ENCODE measurements at regions of chr9 and their contacts with region 1.

Region 1: GRCh38 chr9:128552153-128552743 is at the start of gene SPTAN1:
- DNase-seq: peak; percentile 91 to 97 (median 95)
- ATAC-seq: peak; percentile 85
- H3K4me3 ChIP-seq: peak within 1 kb of the TSS; percentile 85 to 95
- H3K4me3 Mint-ChIP-seq: no peak within 1 kb of the TSS
- H3K27ac ChIP-seq: peak within 1 kb of the TSS; percentile 92 to 93
- H3K27ac Mint-ChIP-seq: peak within 1 kb of the TSS; percentile 96
- H3K4me1 ChIP-seq: peaks cover 54% of the 10 kb centered on the region
- H3K4me1 Mint-ChIP-seq: peaks cover 24% of the 10 kb centered on the region
- H3K27me3 ChIP-seq: no peaks in the 10 kb centered on the region
- H3K27me3 Mint-ChIP-seq: no peaks in the 10 kb centered on the region
- CTCF ChIP-seq: no peak
- total RNA-seq, gene SPTAN1: 299 to 332 TPM

Region 2: DNA sequence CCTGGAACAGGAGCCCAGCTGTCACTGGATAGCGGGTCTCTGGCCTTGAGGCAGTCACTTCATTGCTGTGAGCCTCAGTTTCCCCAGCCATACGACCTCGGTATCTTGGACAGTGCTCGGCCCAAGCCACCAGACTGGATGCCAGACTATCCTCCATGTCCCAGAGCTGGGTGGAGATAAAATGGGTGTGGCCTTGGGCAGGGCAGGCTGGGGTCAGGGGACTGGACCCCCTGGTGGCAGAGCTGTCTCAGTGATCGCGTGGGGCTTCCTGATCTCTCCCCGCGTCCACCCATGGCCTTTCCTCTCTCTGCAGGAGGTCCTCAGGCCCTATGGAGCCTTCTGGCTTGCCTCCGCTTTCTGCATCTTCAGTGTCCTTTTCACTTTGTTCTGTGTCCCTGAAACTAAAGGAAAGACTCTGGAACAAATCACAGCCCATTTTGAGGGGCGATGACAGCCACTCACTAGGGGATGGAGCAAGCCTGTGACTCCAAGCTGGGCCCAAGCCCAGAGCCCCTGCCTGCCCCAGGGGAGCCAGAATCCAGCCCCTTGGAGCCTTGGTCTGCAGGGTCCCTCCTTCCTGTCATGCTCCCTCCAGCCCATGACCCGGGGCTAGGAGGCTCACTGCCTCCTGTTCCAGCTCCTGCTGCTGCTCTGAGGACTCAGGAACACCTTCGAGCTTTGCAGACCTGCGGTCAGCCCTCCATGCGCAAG is 1145.3 kb before region 1 on chr9:
- CTCF ChIA-PET with region 1: no interaction called
- POLR2A ChIA-PET with region 1: no interaction called
- intact Hi-C with region 1: no loop called
- DNase-seq: no peak
- ATAC-seq: no peak
- H3K4me3 ChIP-seq: no peak overlapping the region
- H3K4me3 Mint-ChIP-seq: no peak overlapping the region
- H3K27ac ChIP-seq: no peak overlapping the region
- H3K27ac Mint-ChIP-seq: no peak overlapping the region
- H3K4me1 ChIP-seq: no peaks in the 10 kb centered on the region
- H3K4me1 Mint-ChIP-seq: no peaks in the 10 kb centered on the region
- H3K27me3 ChIP-seq: peaks cover 0 to 10% of the 10 kb centered on the region in 2 experiments
- H3K27me3 Mint-ChIP-seq: peaks cover 43% of the 10 kb centered on the region
- CTCF ChIP-seq: no peak

Region 3: GRCh38 chr9:127611899-127612790 is 940.1 kb before region 1 on chr9 and contains the start of gene STXBP1:
- CTCF ChIA-PET with region 1: no interaction called
- POLR2A ChIA-PET with region 1: no interaction called
- intact Hi-C with region 1: loop called in 1 of 2 experiments (anchors 5 kb)
- DNase-seq: peak; percentile 70 to 92 (median 83)
- ATAC-seq: peak; percentile 80
- H3K4me3 ChIP-seq: peak within 1 kb of the TSS; percentile 59 to 82
- H3K4me3 Mint-ChIP-seq: peak within 1 kb of the TSS; percentile 93
- H3K27ac ChIP-seq: peak within 1 kb of the TSS in 1 of 2 experiments; percentile 42
- H3K27ac Mint-ChIP-seq: peak within 1 kb of the TSS; percentile 92
- H3K4me1 ChIP-seq: peaks cover 32% of the 10 kb centered on the region
- H3K4me1 Mint-ChIP-seq: peaks cover 36% of the 10 kb centered on the region
- H3K27me3 ChIP-seq: peaks cover 4 to 9% of the 10 kb centered on the region in 2 experiments
- H3K27me3 Mint-ChIP-seq: peaks cover 9% of the 10 kb centered on the region
- CTCF ChIP-seq: no peak
- total RNA-seq, gene STXBP1: 7.7 to 8.9 TPM

Region 4: GRCh38 chr9:128103589-128103962 is 448.7 kb before region 1 on chr9:
- CTCF ChIA-PET with region 1: no interaction called
- POLR2A ChIA-PET with region 1: no interaction called
- intact Hi-C with region 1: no loop called
- DNase-seq: peak in 7 of 9 experiments; percentile 16 to 70 (median 51)
- ATAC-seq: peak; percentile 63
- H3K4me3 ChIP-seq: no peak overlapping the region
- H3K4me3 Mint-ChIP-seq: no peak overlapping the region
- H3K27ac ChIP-seq: peak overlapping the region in 1 of 2 experiments; percentile 6
- H3K27ac Mint-ChIP-seq: peak overlapping the region; percentile 67
- H3K4me1 ChIP-seq: peaks cover 68% of the 10 kb centered on the region
- H3K4me1 Mint-ChIP-seq: peaks cover 55% of the 10 kb centered on the region
- H3K27me3 ChIP-seq: no peaks in the 10 kb centered on the region
- H3K27me3 Mint-ChIP-seq: no peaks in the 10 kb centered on the region
- CTCF ChIP-seq: peak; percentile 29

Region 5: DNA sequence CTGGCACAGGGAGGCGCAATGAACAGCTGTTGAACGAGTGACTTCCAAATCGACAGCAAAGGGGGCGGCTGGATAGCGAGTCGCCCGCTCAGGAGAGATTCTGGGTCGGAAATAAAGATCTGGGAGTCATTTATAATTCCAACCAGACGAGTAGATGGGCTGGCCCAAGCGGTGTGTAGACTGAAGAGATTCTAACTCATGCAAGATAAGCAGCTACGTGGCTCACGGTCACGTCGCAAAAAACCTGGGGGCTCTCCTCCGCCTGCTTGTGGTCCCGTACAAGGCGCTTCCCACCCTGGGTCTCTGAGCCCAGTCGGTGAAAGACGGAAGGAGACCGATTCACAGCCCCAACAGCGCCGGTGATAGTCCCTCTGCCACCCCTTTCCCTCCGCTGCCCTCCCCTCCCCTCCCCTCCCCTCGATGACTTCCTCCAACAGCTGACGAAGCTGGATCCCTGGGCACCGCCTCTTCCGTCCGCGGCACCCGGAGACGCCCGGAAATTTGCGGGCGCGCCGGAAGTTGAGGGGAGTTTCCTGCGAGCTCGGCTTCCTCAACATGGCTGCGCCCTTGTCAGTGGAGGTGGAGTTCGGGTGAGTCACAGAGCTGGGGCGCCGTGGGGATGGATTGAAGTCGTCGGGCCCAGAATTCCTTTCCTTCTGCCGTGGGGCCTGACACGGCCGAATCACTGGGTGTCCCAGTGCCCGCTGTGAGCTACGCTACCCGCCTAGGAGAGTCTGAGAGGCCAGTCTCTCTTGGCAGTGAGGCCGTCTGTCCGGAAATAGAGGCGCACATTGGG is 181.2 kb before region 1 on chr9 and contains the start of gene URM1:
- CTCF ChIA-PET with region 1: no interaction called
- POLR2A ChIA-PET with region 1: interaction called, 8 read pairs
- intact Hi-C with region 1: loop called in 1 of 2 experiments (anchors 2 kb)
- DNase-seq: peak; percentile 91 to 98 (median 96)
- ATAC-seq: peak; percentile 90
- H3K4me3 ChIP-seq: peak within 1 kb of the TSS; percentile 84 to 95
- H3K4me3 Mint-ChIP-seq: peak within 1 kb of the TSS; percentile 97
- H3K27ac ChIP-seq: peak within 1 kb of the TSS; percentile 76 to 96
- H3K27ac Mint-ChIP-seq: peak within 1 kb of the TSS; percentile 98
- H3K4me1 ChIP-seq: peaks cover 16% of the 10 kb centered on the region
- H3K4me1 Mint-ChIP-seq: peaks cover 43% of the 10 kb centered on the region
- H3K27me3 ChIP-seq: no peaks in the 10 kb centered on the region
- H3K27me3 Mint-ChIP-seq: no peaks in the 10 kb centered on the region
- CTCF ChIP-seq: no peak
- total RNA-seq, gene URM1: 30.4 to 31.5 TPM

Region 6: GRCh38 chr9:128540634-128541360 is 11.5 kb before region 1 on chr9:
- CTCF ChIA-PET with region 1: interaction called, 3 read pairs
- POLR2A ChIA-PET with region 1: interaction called, 15 read pairs
- intact Hi-C with region 1: no loop called
- DNase-seq: no peak
- ATAC-seq: no peak
- H3K4me3 ChIP-seq: no peak overlapping the region
- H3K4me3 Mint-ChIP-seq: no peak overlapping the region
- H3K27ac ChIP-seq: no peak overlapping the region
- H3K27ac Mint-ChIP-seq: peak overlapping the region; percentile 15
- H3K4me1 ChIP-seq: no peaks in the 10 kb centered on the region
- H3K4me1 Mint-ChIP-seq: peaks cover 3% of the 10 kb centered on the region
- H3K27me3 ChIP-seq: no peaks in the 10 kb centered on the region
- H3K27me3 Mint-ChIP-seq: no peaks in the 10 kb centered on the region
- CTCF ChIP-seq: no peak

Region 7: GRCh38 chr9:128688512-128689292 is 136.5 kb after region 1 on chr9 and contains the start of gene SET:
- CTCF ChIA-PET with region 1: no interaction called
- POLR2A ChIA-PET with region 1: interaction called, 4 read pairs
- intact Hi-C with region 1: loop called (anchors 1 kb)
- DNase-seq: peak; percentile 81 to 97 (median 92)
- ATAC-seq: peak; percentile 78
- H3K4me3 ChIP-seq: peak within 1 kb of the TSS; percentile 68 to 90
- H3K4me3 Mint-ChIP-seq: peak within 1 kb of the TSS; percentile 90
- H3K27ac ChIP-seq: peak within 1 kb of the TSS; percentile 68 to 91
- H3K27ac Mint-ChIP-seq: peak within 1 kb of the TSS; percentile 96
- H3K4me1 ChIP-seq: peaks cover 64% of the 10 kb centered on the region
- H3K4me1 Mint-ChIP-seq: peaks cover 67% of the 10 kb centered on the region
- H3K27me3 ChIP-seq: no peaks in the 10 kb centered on the region
- H3K27me3 Mint-ChIP-seq: no peaks in the 10 kb centered on the region
- CTCF ChIP-seq: no peak
- total RNA-seq, gene SET: 243 to 260 TPM

Region 8: GRCh38 chr9:128771745-128772519 is 219.7 kb after region 1 on chr9 and contains the start of gene ZER1:
- CTCF ChIA-PET with region 1: no interaction called
- POLR2A ChIA-PET with region 1: no interaction called
- intact Hi-C with region 1: loop called in 1 of 2 experiments (anchors 5 kb)
- DNase-seq: peak; percentile 86 to 98 (median 95)
- ATAC-seq: peak; percentile 85
- H3K4me3 ChIP-seq: peak within 1 kb of the TSS; percentile 82 to 98
- H3K4me3 Mint-ChIP-seq: peak within 1 kb of the TSS; percentile 96
- H3K27ac ChIP-seq: peak within 1 kb of the TSS; percentile 80 to 98
- H3K27ac Mint-ChIP-seq: peak within 1 kb of the TSS; percentile 99
- H3K4me1 ChIP-seq: peaks cover 22% of the 10 kb centered on the region
- H3K4me1 Mint-ChIP-seq: peaks cover 33% of the 10 kb centered on the region
- H3K27me3 ChIP-seq: no peaks in the 10 kb centered on the region
- H3K27me3 Mint-ChIP-seq: no peaks in the 10 kb centered on the region
- CTCF ChIP-seq: no peak
- total RNA-seq, gene ZER1: 35.9 to 45.2 TPM

Measured in CD8-positive, alpha-beta T cell (primary cell).